ENCODE measurements at regions of chr10 and their contacts with region 1.

Region 1: GRCh38 chr10:112332509-112333228 is 41.2 kb upstream of the ACSL5 start:
- DNase-seq: peak; percentile 77
- H3K4me3 Mint-ChIP-seq: no peak overlapping the region
- H3K27ac Mint-ChIP-seq: peak overlapping the region; percentile 4
- H3K4me1 Mint-ChIP-seq: peaks cover 52% of the 10 kb centered on the region
- H3K27me3 Mint-ChIP-seq: no peaks in the 10 kb centered on the region
- CTCF ChIP-seq: no peak

Region 2: DNA sequence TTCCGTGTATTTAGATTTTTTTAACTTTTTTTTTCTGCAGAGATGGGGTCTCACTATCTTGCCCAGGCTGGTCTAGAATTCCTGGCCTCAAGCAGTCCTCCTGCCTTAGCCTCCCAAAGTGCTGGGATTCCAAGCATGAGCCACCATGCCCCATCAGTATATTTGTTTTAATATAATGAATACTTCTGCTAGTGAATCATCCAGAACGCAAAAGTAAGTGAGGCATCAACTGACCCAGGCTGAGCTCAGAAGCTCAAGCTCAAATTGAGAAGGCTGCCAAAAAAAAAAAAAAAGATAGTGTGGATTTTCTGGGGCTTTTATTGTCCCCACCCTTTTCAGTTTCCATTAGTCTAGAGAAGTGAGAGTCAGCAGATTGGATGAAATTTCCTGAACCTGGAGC is 88.5 kb before region 1 on chr10:
- CTCF ChIA-PET with region 1: no interaction called
- intact Hi-C with region 1: no loop called
- DNase-seq: no peak
- H3K4me3 Mint-ChIP-seq: no peak overlapping the region
- H3K27ac Mint-ChIP-seq: no peak overlapping the region
- H3K4me1 Mint-ChIP-seq: no peaks in the 10 kb centered on the region
- H3K27me3 Mint-ChIP-seq: peaks cover 29% of the 10 kb centered on the region
- CTCF ChIP-seq: no peak

Region 3: DNA sequence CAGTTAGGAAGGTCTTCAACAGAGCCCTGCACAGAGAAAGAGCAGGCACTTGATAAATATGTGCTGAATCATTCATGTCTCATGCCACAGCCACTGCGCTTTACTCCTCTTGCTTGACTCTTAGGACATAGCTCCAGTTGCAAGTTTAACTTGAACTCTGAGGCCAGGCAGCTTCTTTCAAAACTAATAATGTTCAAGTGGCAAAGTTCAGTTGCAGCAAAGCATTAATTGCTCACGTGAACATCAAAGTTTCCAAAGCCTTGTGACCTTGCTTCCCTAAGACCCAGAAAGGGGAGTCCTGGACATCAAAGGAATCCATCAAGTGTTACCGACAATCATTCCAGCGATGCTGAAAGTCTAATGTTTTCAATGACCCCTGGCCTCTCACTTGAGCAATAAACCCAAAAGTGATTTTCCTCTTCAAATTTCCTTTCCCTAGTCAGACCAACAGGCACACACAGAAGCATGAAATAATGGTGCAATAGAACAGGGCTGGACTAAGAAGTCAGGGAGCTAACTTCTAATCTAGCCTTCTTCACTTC is 71.3 kb before region 1 on chr10:
- CTCF ChIA-PET with region 1: no interaction called
- intact Hi-C with region 1: no loop called
- DNase-seq: no peak
- H3K4me3 Mint-ChIP-seq: no peak overlapping the region
- H3K27ac Mint-ChIP-seq: no peak overlapping the region
- H3K4me1 Mint-ChIP-seq: no peaks in the 10 kb centered on the region
- H3K27me3 Mint-ChIP-seq: peaks cover 13% of the 10 kb centered on the region
- CTCF ChIP-seq: no peak

Region 4: GRCh38 chr10:112375721-112376395 is 43.2 kb after region 1 on chr10:
- CTCF ChIA-PET with region 1: interaction called, 5 read pairs
- intact Hi-C with region 1: loop called (anchors 5 kb)
- DNase-seq: peak; percentile 29
- H3K4me3 Mint-ChIP-seq: peak overlapping the region; percentile 77
- H3K27ac Mint-ChIP-seq: peak overlapping the region; percentile 99
- H3K4me1 Mint-ChIP-seq: peaks cover 47% of the 10 kb centered on the region
- H3K27me3 Mint-ChIP-seq: no peaks in the 10 kb centered on the region
- CTCF ChIP-seq: no peak

Region 5: GRCh38 chr10:112394475-112394875 is 61.8 kb after region 1 on chr10:
- CTCF ChIA-PET with region 1: interaction called, 3 read pairs
- intact Hi-C with region 1: loop called (anchors 5 kb)
- DNase-seq: peak; percentile 19
- H3K4me3 Mint-ChIP-seq: no peak overlapping the region
- H3K27ac Mint-ChIP-seq: no peak overlapping the region
- H3K4me1 Mint-ChIP-seq: peaks cover 12% of the 10 kb centered on the region
- H3K27me3 Mint-ChIP-seq: no peaks in the 10 kb centered on the region
- CTCF ChIP-seq: no peak

Region 6: DNA sequence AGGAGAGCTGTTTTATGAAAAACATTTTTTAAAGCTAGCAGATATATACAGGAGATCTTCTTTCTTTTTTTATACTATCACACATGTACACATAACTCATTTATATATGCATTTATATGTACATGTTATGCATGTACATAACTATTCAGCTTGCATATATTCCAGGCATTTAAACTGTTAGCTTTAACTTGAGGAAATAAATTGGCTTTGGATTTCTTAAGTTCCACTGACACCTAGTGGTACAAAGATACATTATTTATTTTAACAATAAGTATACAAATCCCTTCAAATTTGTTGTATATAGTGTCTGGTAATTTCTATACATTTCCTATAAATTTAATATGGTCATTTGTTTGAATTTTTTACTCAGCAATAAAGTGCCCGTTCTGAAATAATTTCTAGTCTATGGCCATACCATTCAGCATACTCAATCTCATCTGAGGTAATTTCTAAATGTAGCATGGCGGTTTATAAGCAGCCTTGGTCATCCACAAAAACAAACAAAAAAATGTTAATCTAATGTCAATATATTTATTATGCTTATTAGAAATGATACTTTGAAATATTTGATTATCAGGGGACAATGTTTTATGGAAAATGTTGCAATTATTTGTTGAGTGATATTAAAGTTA is 102.4 kb after region 1 on chr10:
- CTCF ChIA-PET with region 1: interaction called, 6 read pairs
- intact Hi-C with region 1: loop called (anchors 5 kb)
- DNase-seq: no peak
- H3K4me3 Mint-ChIP-seq: no peak overlapping the region
- H3K27ac Mint-ChIP-seq: no peak overlapping the region
- H3K4me1 Mint-ChIP-seq: no peaks in the 10 kb centered on the region
- H3K27me3 Mint-ChIP-seq: no peaks in the 10 kb centered on the region
- CTCF ChIP-seq: peak; percentile 35